Activated CD8-positive, alpha-beta memory T cell treated with anti-CD3 and anti-CD28 coated beads, Interleukin-2, amount 10 ng/mL, durations not matched to agents 7 days and 5 days (primary cell): ENCODE measurements at regions of chr18 and their contacts with region 1.

Region 1: GRCh38 chr18:50356036-50356945 is 18.6 kb upstream of the SKA1 start:
- DNase-seq: peak; percentile 48
- ATAC-seq: peak; percentile 60
- H3K4me3 Mint-ChIP-seq: no peak overlapping the region
- H3K27ac Mint-ChIP-seq: peak overlapping the region; percentile 26
- H3K4me1 Mint-ChIP-seq: peaks cover 20% of the 10 kb centered on the region
- H3K27me3 Mint-ChIP-seq: peaks cover 37% of the 10 kb centered on the region

Region 2: DNA sequence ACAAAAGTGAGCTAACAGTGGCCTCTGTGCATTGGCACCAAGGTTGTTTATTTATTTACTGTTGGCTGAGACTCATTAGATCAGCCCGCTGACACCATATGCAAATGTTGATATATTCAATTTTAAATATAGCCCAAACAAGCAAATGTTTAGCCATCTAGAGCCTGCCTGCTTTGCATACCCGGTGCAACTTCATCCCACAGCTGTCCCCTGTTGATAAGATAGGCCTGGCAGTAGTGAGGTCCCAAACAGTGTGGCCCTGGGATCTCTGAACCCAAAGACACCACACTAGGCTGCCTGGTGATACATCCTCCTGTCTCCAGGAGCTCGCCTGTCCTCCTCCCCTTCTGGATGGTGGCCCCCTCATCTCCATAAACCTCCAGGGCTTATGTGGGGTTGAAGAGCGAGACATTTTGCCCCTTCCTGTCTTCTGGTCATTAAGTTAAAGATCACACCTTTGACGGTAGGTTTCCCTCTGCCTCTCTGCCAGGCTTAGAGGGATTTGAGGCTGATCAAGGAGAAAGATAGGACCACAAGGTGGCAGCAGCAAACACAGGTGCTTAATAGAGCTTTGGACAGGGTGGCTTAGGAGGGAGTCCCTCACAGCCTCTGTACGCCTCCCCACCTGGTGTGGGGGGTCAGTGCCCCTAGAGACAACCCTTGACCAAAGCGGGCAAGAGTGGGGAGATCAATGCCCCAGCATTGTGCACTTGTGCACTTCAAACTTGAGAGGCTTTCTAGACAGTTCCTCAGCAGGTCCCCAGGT is 137.7 kb before region 1 on chr18:
- CTCF ChIA-PET with region 1: interaction called, 61 read pairs
- DNase-seq: peak; percentile 54
- ATAC-seq: peak; percentile 55
- H3K4me3 Mint-ChIP-seq: no peak overlapping the region
- H3K27ac Mint-ChIP-seq: no peak overlapping the region
- H3K4me1 Mint-ChIP-seq: no peaks in the 10 kb centered on the region
- H3K27me3 Mint-ChIP-seq: peaks cover 30% of the 10 kb centered on the region

Region 3: DNA sequence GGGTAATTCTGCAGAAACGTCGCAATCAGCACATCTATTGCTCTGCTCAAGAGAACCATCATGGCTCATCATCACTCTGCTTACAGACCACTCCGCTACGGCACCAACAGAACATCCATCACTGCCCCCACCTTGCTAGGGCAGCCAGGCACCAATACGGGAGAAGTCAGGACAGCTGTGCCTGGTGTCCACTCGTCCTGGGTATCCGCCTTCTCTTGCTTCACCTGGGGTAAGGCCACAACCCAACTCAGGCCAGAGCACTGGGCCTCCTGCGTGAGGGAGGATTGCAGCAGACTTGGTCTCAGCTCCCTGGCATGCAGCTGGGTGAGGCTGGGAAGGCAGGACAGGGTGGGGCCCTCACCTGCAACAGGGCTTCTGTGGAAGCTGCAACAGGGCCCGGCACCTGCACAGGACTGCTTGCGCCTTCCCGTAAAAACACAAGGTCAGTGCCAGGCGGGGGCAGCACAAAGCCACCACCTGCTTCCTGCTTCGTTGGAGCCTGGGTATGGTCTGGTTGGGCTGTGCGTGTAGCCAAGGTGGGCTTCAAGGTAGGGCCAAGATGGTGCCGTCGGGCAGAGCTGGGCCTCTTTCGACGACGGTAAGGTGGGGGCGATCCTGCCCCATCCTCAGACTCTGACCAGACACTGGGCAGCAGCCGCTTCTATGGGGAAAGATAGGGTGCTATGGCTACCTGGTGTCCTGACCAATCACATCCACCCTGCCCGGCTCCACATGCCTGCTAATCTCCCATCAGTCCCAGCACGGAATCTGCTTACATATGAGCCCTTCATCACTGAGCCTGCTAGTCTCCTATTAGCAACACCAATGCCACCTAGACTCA is 82.9 kb before region 1 on chr18:
- CTCF ChIA-PET with region 1: interaction called, 29 read pairs
- DNase-seq: no peak
- ATAC-seq: no peak
- H3K4me3 Mint-ChIP-seq: no peak overlapping the region
- H3K27ac Mint-ChIP-seq: no peak overlapping the region
- H3K4me1 Mint-ChIP-seq: peaks cover 9% of the 10 kb centered on the region
- H3K27me3 Mint-ChIP-seq: no peaks in the 10 kb centered on the region

Region 4: DNA sequence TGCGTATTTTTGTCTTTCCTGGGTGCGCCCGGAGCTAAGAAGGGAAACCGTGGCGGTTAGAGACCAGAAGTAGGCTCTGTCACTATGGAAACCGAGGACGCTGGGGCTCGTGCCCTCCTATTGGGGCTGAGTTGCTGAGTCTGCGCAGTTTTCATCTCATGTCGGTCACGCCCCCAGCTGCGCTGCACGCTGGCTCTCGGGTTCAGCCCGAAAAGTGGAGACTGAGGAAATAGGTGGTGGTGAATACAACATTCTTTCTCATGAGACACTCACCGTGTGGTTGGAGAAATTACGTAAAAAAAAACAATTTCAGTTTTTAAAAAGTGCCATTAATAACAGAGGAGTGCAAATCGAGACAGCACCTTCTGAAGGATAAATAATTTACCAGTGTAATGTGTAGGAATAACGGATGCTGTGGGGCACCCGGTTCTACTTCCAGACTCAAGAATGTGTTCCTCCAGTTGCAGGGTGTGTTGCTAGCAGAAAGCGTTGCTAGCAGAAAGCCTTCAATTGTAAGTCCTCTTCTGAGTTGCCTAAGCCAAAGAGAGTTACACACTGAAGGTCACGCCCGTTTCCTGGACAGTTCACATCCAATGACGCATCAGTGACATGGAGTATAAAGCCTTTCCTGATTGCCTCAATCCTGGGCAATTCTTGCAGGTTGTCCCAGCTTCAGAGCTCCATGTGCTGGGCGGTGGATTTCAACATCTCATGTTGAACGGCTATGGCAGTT is 48.4 kb before region 1 on chr18:
- CTCF ChIA-PET with region 1: interaction called, 17 read pairs
- DNase-seq: peak; percentile 96
- ATAC-seq: peak; percentile 100
- H3K4me3 Mint-ChIP-seq: peak overlapping the region; percentile 82
- H3K27ac Mint-ChIP-seq: peak overlapping the region; percentile 67
- H3K4me1 Mint-ChIP-seq: peaks cover 14% of the 10 kb centered on the region
- H3K27me3 Mint-ChIP-seq: peaks cover 30% of the 10 kb centered on the region

Region 5: GRCh38 chr18:50429207-50429948 is 73.1 kb after region 1 on chr18:
- CTCF ChIA-PET with region 1: interaction called, 13 read pairs
- DNase-seq: no peak
- ATAC-seq: no peak
- H3K4me3 Mint-ChIP-seq: no peak overlapping the region
- H3K27ac Mint-ChIP-seq: no peak overlapping the region
- H3K4me1 Mint-ChIP-seq: no peaks in the 10 kb centered on the region
- H3K27me3 Mint-ChIP-seq: peaks cover 26% of the 10 kb centered on the region